Aorta (tissue), 5 donors: ENCODE measurements at regions of chr12 and their contacts with region 1.

Region 1: GRCh38 chr12:106386813-106387535 is 29.4 kb downstream of the POLR3B start:
- DNase-seq: no peak
- ATAC-seq: no peak
- H3K4me3 ChIP-seq: no peak overlapping the region
- H3K27ac ChIP-seq: no peak overlapping the region
- H3K4me1 ChIP-seq: no peaks in the 10 kb centered on the region
- H3K27me3 ChIP-seq: no peaks in the 10 kb centered on the region

Region 2: DNA sequence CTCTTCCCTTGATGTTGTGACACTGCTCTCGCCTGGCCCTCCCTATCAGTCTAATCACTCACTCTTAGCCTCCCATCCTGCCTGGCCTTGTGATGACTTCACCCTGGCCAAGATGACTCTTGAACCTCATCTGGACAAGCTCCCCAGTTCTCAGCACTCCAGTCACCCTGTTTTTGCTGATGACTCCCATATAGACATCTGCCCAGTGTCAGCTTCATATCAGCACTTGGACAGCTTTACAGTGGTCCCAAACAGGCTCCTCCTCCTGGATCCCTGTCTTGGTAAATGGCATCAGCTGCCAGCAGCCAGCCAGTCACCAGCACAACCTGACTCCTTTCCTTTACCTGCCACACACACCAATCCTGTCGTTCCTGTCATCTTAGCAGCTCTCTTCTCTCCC is 74.8 kb after region 1 on chr12:
- intact Hi-C with region 1: no loop called
- DNase-seq: no peak
- ATAC-seq: no peak
- H3K4me3 ChIP-seq: no peak overlapping the region
- H3K27ac ChIP-seq: no peak overlapping the region
- H3K4me1 ChIP-seq: no peaks in the 10 kb centered on the region
- H3K27me3 ChIP-seq: no peaks in the 10 kb centered on the region

Region 3: GRCh38 chr12:106551410-106551809 is 164.4 kb after region 1 on chr12:
- intact Hi-C with region 1: no loop called
- DNase-seq: no peak
- ATAC-seq: no peak
- H3K4me3 ChIP-seq: no peak overlapping the region
- H3K27ac ChIP-seq: no peak overlapping the region
- H3K4me1 ChIP-seq: no peaks in the 10 kb centered on the region
- H3K27me3 ChIP-seq: no peaks in the 10 kb centered on the region

Region 4: GRCh38 chr12:106841510-106842302 is 454.7 kb after region 1 on chr12:
- intact Hi-C with region 1: loop called in 1 of 2 experiments (anchors 5 kb)
- DNase-seq: no peak
- ATAC-seq: peak; percentile 77
- H3K4me3 ChIP-seq: no peak overlapping the region
- H3K27ac ChIP-seq: no peak overlapping the region
- H3K4me1 ChIP-seq: no peaks in the 10 kb centered on the region
- H3K27me3 ChIP-seq: no peaks in the 10 kb centered on the region

Region 5: GRCh38 chr12:106919910-106920544 is 533.1 kb after region 1 on chr12:
- intact Hi-C with region 1: loop called (anchors 1 to 5 kb)
- DNase-seq: no peak
- ATAC-seq: no peak
- H3K4me3 ChIP-seq: no peak overlapping the region
- H3K27ac ChIP-seq: no peak overlapping the region
- H3K4me1 ChIP-seq: no peaks in the 10 kb centered on the region
- H3K27me3 ChIP-seq: no peaks in the 10 kb centered on the region

Region 6: GRCh38 chr12:106978035-106978800 is 591.2 kb after region 1 on chr12:
- intact Hi-C with region 1: no loop called
- DNase-seq: peak in 1 of 2 donors; percentile 65
- ATAC-seq: no peak
- H3K4me3 ChIP-seq: no peak overlapping the region
- H3K27ac ChIP-seq: peak overlapping the region in 1 of 2 donors; percentile 67
- H3K4me1 ChIP-seq: peaks cover 3 to 14% of the 10 kb centered on the region in 2 donors
- H3K27me3 ChIP-seq: no peaks in the 10 kb centered on the region

Region 7: DNA sequence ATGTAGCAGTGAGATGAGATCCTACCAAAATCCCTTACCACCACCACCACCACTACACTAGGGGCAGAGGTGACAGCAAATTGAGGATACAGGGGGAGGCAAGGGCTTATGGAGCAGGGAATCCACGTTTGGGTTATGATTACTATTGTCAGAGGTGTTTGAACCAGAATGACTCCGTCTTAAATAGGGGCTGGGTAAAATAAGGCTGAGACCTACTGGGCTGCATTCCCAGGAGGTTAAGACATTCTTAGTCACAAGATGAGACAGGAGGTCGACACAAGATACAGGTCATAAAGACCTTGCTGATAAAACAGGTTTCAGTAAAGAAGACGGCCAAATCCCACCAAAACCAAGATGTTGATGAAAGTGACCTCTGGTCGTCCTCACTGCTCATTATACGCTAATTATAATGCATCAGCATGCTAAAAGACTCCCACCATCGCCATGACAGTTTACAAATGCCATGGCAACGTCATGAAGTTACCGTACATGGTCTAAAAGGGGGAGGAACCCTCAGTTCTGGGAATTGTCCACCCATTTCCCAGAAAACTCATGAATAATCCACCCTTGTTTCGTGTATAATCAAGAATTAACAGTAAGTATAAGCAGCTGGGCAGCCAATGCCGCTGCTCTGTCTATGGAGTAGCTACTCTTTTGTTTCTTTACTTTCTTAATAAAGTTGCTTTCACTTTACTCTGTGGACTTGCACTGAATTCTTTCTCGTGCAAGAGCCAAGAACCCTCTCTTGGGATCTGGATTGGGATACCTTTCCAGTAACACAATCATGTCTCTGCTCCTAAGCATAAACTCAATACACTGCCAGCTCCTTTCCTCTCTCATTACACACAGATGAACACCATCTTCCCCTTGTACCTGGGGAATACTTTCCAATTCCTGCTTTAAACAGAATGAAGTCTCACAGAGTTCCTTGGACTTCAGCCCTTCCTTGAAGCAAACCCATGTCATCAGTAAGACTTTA is 723.1 kb after region 1 on chr12:
- intact Hi-C with region 1: loop called (anchors 10 kb)
- DNase-seq: no peak
- ATAC-seq: no peak
- H3K4me3 ChIP-seq: peak overlapping the region in 1 of 2 donors; percentile 33
- H3K27ac ChIP-seq: no peak overlapping the region
- H3K4me1 ChIP-seq: peaks cover 0 to 7% of the 10 kb centered on the region in 2 donors
- H3K27me3 ChIP-seq: no peaks in the 10 kb centered on the region